ENCODE measurements at regions of chr16 and their contacts with region 1.

Region 1: DNA sequence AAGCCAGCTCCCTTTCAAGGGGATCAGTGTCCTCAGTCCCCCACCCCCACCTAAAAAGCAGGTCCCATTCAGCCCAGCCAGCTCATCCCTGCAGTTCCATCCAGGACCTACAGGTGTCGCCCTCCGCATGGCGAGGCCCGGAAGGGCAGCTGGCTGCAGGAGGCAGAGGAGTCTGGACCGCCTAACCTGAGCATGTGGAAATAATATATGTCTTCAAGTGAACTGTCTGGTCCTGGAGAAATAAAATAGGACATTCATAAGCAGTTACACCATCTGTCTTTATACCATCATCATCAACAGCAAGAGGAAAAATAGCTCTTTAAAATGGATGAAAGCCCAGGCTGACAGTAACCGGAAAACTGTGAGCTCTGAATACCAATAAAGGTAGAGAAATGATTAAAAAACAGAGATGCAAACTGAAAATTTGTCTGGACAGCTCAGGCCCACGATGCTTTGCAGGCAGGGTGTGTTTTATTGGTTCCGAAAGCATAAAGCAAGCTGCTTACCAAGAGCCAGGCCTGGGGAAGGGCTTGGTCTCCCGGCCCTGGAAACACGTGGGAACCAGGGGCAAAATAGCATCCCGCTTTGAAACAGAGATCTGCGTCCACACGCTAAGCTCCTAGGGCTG is 215.2 kb downstream of the ZFHX3 start:
- DNase-seq: peak; percentile 71
- H3K4me3 Mint-ChIP-seq: no peak overlapping the region
- H3K27ac Mint-ChIP-seq: no peak overlapping the region
- H3K4me1 Mint-ChIP-seq: peaks cover 3% of the 10 kb centered on the region
- H3K27me3 Mint-ChIP-seq: no peaks in the 10 kb centered on the region

Region 2: GRCh38 chr16:72751076-72751475 is 81.7 kb before region 1 on chr16:
- CTCF ChIA-PET with region 1: no interaction called
- POLR2A ChIA-PET with region 1: no interaction called
- DNase-seq: no peak
- H3K4me3 Mint-ChIP-seq: no peak overlapping the region
- H3K27ac Mint-ChIP-seq: no peak overlapping the region
- H3K4me1 Mint-ChIP-seq: no peaks in the 10 kb centered on the region
- H3K27me3 Mint-ChIP-seq: no peaks in the 10 kb centered on the region

Region 3: GRCh38 chr16:72818236-72818845 is 14.4 kb before region 1 on chr16:
- CTCF ChIA-PET with region 1: interaction called, 12 read pairs
- POLR2A ChIA-PET with region 1: no interaction called
- DNase-seq: no peak
- H3K4me3 Mint-ChIP-seq: no peak overlapping the region
- H3K27ac Mint-ChIP-seq: no peak overlapping the region
- H3K4me1 Mint-ChIP-seq: peaks cover 2% of the 10 kb centered on the region
- H3K27me3 Mint-ChIP-seq: peaks cover 6% of the 10 kb centered on the region

Region 4: GRCh38 chr16:72844225-72844920 is 11.6 kb after region 1 on chr16:
- CTCF ChIA-PET with region 1: interaction called, 10 read pairs
- POLR2A ChIA-PET with region 1: no interaction called
- DNase-seq: no peak
- H3K4me3 Mint-ChIP-seq: no peak overlapping the region
- H3K27ac Mint-ChIP-seq: peak overlapping the region; percentile 54
- H3K4me1 Mint-ChIP-seq: peaks cover 25% of the 10 kb centered on the region
- H3K27me3 Mint-ChIP-seq: peaks cover 10% of the 10 kb centered on the region

Region 5: DNA sequence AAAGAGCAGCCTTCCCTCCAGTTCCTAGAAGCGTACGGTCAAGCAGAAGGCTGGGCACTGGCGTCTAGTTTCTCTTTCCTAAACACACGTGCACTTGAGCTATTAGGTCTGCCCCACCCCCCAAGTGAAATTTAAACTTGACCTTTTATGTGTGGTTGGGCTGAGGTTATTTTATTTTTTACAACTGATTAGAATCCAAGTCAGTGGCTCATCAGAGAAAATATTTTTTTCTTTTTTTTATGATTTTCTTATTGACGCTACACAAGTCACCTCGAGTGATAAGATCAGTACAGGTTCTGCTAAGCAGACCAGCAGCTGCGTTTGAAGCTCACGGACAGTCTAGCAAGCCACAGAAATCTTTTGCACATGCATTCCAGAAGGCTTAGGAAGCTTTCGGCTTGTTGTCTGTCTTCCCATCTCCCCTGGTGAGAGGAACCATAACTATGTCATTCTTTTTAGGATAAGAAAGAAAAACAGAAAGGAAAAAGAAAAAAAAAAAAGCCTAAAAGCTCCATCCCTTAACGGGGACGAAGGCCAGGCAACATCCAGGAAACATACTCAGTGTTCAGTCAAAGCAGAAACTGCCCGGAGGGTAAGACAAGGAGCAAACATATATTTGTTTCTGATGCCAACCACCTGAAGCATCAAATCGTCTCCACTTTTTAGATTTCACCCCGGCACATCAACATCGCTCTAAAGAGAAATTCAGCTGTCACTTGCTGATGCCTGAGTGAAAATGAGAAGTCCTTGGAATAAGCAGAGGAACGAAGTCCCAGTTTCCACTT is 120.3 kb after region 1 on chr16:
- CTCF ChIA-PET with region 1: no interaction called
- POLR2A ChIA-PET with region 1: no interaction called
- DNase-seq: no peak
- H3K4me3 Mint-ChIP-seq: no peak overlapping the region
- H3K27ac Mint-ChIP-seq: no peak overlapping the region
- H3K4me1 Mint-ChIP-seq: no peaks in the 10 kb centered on the region
- H3K27me3 Mint-ChIP-seq: no peaks in the 10 kb centered on the region

Measured in activated CD4-positive, alpha-beta T cell treated with anti-CD3 and anti-CD28 coated beads, Interleukin-2, amount 10 ng/mL, durations not matched to agents 7 days and 5 days (primary cell).